Caco-2 (cell line): ENCODE measurements at regions of chr10 and their contacts with region 1.

Region 1: DNA sequence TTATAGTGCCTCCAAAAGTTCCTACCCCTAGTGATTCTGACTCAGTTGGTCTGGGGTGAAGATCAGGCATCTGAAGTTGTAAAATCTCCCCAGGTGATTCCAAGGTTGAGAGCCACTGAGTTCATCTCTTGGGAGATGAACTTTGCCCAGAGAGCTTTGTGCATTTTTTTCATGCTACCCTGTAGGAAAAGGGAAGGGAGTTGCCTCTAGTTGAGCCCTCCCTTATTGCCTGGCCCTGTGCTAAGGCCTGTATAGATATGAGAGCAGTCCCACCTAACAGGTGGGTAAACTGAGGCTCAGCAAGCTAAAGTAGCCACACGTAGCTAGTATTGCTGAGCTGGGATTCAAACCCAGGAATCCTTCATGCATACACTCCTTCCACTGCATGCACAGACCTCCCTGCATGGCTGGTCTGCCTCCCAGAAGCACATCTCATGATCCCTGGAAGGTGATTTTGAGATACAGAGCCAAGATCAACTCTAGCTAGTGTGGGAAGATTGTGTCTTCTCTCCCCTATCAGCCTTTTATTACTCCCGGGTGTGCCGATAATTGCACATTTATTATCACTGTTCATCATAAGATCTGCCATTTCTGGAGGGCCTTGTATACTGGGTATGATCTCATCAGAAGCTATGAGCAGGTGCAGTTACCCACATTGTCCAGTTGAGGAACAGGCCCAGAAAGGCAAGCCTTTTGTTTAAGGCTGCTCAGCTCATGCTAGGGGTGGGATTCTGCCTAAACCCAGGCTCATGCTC is 47.0 kb downstream of the TBATA start:
- DNase-seq: no peak
- H3K4me3 ChIP-seq: no peak overlapping the region
- H3K4me3 Mint-ChIP-seq: no peak overlapping the region
- H3K27ac Mint-ChIP-seq: no peak overlapping the region
- H3K4me1 ChIP-seq: peaks cover 13% of the 10 kb centered on the region; the same call in 1 of the 2 replicates
- H3K4me1 Mint-ChIP-seq: no peaks in the 10 kb centered on the region
- H3K27me3 ChIP-seq: no peaks in the 10 kb centered on the region
- H3K27me3 Mint-ChIP-seq: no peaks in the 10 kb centered on the region
- CTCF ChIP-seq: no peak

Region 2: DNA sequence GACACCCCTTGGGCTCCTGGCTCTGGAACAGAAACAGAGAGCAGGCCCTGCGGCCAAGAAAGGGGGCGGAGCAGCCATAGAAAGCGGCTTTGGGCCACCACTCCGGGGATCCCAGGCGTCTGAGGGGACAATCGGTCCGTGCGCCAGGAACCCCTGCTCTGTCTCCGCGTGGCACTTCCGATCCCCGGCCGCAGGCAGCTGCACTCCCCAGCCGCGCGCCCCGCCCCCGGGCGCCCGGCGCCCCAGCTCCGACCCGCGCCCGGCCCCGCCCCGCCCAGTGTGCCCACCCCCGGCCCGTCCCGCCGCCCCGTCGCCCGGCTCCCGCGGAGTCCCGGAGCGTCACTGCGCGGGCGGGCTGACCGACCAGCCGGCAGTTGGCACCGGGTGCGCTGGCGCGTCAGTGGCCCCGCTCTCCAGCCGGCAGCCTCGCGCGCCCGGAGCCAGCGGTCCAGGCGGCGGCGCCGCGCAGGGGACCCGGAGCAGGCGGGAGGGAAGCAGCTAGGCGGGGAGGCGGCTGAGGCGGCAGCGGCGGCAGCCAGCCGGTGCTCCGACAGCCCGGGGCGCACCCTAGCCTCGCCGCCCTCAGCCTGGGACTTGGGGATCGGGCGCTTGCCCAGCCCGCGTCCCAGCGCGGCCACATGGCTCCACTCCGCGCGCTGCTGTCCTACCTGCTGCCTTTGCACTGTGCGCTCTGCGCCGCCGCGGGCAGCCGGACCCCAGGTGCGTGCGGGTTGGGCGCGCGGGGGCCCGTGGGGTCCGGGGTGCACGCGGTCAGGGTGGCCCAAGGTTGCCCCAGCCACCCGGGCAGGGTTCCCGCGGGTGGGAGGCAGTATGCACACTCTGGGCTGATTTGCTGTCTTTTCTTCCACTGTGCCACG is 65.8 kb before region 1 on chr10 and contains the start of gene ADAMTS14:
- CTCF ChIA-PET with region 1: no interaction called
- POLR2A ChIA-PET with region 1: no interaction called
- intact Hi-C with region 1: loop called (anchors 5 kb)
- DNase-seq: peak in 1 of 2 experiments; percentile 45
- H3K4me3 ChIP-seq: peak within 1 kb of the TSS; percentile 38
- H3K4me3 Mint-ChIP-seq: peak within 1 kb of the TSS; percentile 68
- H3K27ac Mint-ChIP-seq: no peak within 1 kb of the TSS
- H3K4me1 ChIP-seq: peaks cover 3% of the 10 kb centered on the region; the same call in 1 of the 2 replicates
- H3K4me1 Mint-ChIP-seq: peaks cover 7% of the 10 kb centered on the region
- H3K27me3 ChIP-seq: peaks cover 7% of the 10 kb centered on the region
- H3K27me3 Mint-ChIP-seq: peaks cover 28% of the 10 kb centered on the region
- CTCF ChIP-seq: no peak
- total RNA-seq, gene ADAMTS14: not detected in 2 replicates

Region 3: GRCh38 chr10:70699659-70700174 is 38.5 kb before region 1 on chr10:
- CTCF ChIA-PET with region 1: no interaction called
- POLR2A ChIA-PET with region 1: no interaction called
- intact Hi-C with region 1: no loop called
- DNase-seq: peak in 1 of 2 experiments; percentile 34
- H3K4me3 ChIP-seq: no peak overlapping the region
- H3K4me3 Mint-ChIP-seq: no peak overlapping the region
- H3K27ac Mint-ChIP-seq: no peak overlapping the region
- H3K4me1 ChIP-seq: no peaks in the 10 kb centered on the region
- H3K4me1 Mint-ChIP-seq: no peaks in the 10 kb centered on the region
- H3K27me3 ChIP-seq: no peaks in the 10 kb centered on the region
- H3K27me3 Mint-ChIP-seq: no peaks in the 10 kb centered on the region
- CTCF ChIP-seq: no peak